ENCODE measurements at regions of chr12 and their contacts with region 1.

Region 1: DNA sequence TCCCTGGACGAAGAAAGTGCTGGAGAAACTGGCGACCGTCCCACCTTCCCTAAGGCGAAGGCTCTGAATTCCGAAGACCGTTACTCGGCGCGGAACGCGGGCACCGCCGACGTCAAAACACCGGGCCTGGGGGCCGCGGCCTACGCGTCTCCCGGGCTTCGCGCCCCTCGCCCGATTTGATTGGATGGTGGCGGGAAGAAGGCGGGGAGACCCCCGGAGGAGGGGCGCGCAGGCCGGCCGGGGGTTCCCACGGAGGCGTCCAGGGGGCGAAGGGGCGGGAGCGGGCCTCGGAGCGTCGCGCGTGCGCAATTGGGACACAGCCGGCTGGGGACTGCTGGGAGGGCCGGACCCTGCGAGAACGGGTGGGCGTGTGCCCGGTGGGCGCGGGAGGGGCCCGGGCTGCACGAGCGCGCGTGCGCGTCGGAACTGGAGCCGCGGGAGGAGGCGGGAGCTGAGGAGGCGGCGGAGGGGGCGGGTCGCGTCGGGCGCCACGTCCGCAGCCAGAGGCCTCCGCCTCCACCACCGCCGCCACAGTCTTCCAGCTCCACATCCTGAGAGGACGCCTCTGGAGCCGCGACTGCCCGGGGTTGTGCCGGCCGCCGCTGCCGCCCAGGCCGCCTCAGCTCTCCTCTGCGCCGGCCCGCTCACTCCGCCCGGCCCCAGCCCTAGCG is at the start of gene TMEM263:
- DNase-seq: peak; percentile 95
- H3K4me3 ChIP-seq: peak within 1 kb of the TSS; percentile 80
- H3K27ac ChIP-seq: peak within 1 kb of the TSS; percentile 82
- H3K4me1 ChIP-seq: peaks cover 26% of the 10 kb centered on the region
- CTCF ChIP-seq: no peak
- total RNA-seq, gene TMEM263: 34.1 and 43.9 TPM in 2 replicates

Region 2: DNA sequence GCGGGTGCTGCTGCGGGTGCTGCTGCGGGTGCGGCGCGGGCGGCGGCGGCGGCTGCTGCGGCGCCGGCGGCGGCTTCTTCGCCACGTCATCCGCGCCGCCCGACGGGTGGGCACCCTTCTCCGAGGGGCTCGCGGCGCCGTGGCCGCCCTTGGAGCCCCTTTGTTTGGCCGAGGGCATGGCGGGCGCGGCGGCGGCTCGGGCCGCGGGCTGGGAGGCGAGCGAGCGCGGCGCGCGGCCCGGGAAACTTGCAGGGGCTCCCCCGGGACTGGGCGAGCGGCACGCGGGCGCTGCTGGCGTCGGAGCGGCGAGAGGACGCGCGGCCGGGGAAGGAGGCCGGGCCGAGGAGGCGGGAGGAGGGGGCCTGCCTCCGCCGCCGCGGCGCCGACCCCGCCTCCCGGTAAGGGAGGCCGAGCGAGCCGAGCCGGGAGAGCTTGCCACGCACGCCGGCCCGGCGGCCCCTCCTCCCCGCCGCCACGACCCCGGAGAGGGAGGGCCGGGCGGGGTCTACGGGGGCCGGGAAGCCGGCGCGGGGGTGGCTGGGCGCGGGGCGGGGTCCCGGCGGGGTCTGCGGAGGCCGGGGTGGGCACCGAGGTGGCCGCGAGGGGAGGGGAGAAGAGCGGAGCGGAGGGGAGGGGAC is 707.7 kb before region 1 on chr12 and contains the start of gene CKAP4:
- CTCF ChIA-PET with region 1: no interaction called
- POLR2A ChIA-PET with region 1: no interaction called
- intact Hi-C with region 1: loop called (anchors 2 kb)
- DNase-seq: peak; percentile 74
- H3K4me3 ChIP-seq: peak within 1 kb of the TSS; percentile 84
- H3K27ac ChIP-seq: peak within 1 kb of the TSS; percentile 95
- H3K4me1 ChIP-seq: peaks cover 63% of the 10 kb centered on the region
- CTCF ChIP-seq: no peak
- total RNA-seq, gene CKAP4: 17.5 and 18.9 TPM in 2 replicates

Region 3: DNA sequence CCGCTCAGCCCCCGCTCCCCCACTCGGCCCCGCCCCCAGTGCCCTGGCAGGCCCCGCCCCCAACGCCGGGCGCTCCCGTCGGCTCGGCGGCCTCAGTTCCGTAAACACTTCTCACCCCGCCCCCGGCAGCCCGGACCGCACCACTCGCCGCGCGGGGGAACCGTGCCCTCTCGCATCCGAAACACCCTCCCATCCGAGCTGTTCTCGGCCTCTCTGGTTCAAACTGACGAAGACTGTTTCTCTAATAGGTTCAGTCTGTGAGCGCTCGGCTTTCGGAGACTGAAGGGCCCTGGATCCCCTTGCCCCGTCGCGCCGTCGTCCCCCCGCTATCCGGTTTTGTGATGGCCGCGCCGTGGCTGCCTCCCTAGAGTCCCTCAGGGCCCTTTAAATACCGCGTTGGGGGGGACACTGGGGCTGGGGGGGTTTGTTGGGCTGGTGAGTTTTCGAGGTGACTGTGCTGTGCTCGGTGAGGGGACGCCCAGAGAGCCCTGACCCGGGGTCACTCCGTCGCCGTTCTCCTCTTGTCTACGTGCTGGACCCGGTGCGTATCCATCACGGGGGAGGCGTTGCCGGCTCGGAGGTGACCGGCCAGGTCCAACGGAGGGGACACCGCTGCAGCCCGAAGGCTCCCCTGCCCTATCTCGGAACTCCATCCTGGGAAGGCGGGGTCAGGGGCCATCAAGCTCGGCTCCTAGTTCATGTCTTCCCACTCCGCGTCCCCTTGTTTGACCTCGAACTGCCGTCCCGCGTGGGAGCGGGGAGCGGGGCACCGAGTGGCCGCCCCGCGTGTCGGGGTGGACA is 652.9 kb before region 1 on chr12 and contains the start of gene TCP11L2:
- CTCF ChIA-PET with region 1: no interaction called
- POLR2A ChIA-PET with region 1: no interaction called
- intact Hi-C with region 1: loop called (anchors 5 kb)
- DNase-seq: peak; percentile 89
- H3K4me3 ChIP-seq: peak within 1 kb of the TSS; percentile 95
- H3K27ac ChIP-seq: peak within 1 kb of the TSS; percentile 57
- H3K4me1 ChIP-seq: peaks cover 44% of the 10 kb centered on the region
- CTCF ChIP-seq: no peak
- total RNA-seq, gene TCP11L2: 1.2 and 1.8 TPM in 2 replicates

Region 4: GRCh38 chr12:106760184-106760531 is 195.4 kb before region 1 on chr12:
- CTCF ChIA-PET with region 1: interaction called, 9 read pairs
- POLR2A ChIA-PET with region 1: no interaction called
- intact Hi-C with region 1: loop called (anchors 5 kb)
- DNase-seq: peak; percentile 95
- H3K4me3 ChIP-seq: peak overlapping the region; percentile 59
- H3K27ac ChIP-seq: peak overlapping the region; percentile 64
- H3K4me1 ChIP-seq: peaks cover 34% of the 10 kb centered on the region
- CTCF ChIP-seq: no peak

Region 5: GRCh38 chr12:106934277-106934676 is 21.2 kb before region 1 on chr12:
- CTCF ChIA-PET with region 1: no interaction called
- POLR2A ChIA-PET with region 1: no interaction called
- intact Hi-C with region 1: no loop called
- DNase-seq: no peak
- H3K4me3 ChIP-seq: no peak overlapping the region
- H3K27ac ChIP-seq: no peak overlapping the region
- H3K4me1 ChIP-seq: no peaks in the 10 kb centered on the region
- CTCF ChIP-seq: no peak

Region 6: DNA sequence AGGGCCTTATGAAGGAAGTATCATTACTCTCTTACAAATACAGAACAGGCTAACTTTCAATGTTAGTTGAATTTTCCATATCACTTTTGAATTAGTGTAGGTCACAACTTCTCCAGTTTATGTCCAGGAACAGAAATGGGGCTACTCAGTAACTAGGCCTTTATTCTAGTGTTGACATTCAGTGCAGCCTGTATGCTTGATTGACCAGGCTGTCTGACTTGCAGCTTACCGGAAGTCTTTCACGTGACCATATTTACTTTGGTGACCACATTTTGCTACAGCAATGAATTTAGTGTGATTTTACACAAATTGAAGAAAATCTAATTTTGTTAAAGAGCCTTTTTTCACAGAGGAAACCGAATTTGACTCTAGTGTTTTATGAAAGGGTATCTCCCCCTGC is 19.0 kb after region 1 on chr12:
- CTCF ChIA-PET with region 1: no interaction called
- POLR2A ChIA-PET with region 1: interaction called, 6 read pairs
- intact Hi-C with region 1: loop called (anchors 2 kb)
- DNase-seq: peak; percentile 63
- H3K4me3 ChIP-seq: peak overlapping the region; percentile 14
- H3K27ac ChIP-seq: no peak overlapping the region
- H3K4me1 ChIP-seq: peaks cover 21% of the 10 kb centered on the region
- CTCF ChIP-seq: no peak

Region 7: DNA sequence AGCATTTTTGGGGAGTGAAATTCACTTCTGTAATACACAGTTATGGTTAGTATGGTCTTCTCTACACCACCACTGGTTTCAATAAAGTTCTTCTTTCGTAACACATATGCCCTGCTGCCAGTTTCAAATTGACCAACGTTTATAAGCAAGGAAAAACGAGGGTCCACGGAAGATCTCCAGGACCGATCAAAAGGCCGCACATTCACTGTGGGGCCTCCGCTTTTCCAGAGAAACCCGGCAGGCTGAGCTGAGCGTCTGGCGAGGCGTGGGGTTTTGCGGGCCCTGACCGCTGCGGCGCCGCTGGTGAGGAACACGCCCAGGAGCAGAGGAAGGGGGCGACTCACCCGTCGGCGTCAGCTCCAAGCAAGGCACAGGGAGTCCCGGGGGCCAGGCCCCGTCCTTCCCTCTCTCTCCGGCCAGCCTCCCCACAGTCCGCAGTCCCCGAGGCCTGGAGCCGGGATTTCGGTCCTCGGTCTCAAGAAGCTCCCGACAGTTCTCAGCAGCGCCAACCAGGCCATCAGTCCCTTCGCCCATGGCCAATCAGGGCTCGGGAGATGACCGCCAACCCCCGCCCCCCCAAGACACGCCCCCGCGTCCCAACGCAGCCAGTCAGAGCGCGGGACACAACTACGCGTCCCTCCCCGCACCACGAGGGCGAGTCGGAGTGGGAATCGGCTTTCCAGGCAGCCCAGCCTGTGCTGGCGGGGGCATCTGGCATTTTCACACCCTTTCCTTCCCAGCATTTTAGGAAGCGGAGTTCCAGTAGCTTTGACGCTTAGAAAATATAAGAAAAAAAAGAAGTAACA is 31.3 kb after region 1 on chr12 and contains the start of gene MTERF2:
- CTCF ChIA-PET with region 1: no interaction called
- POLR2A ChIA-PET with region 1: interaction called, 8 read pairs
- intact Hi-C with region 1: loop called (anchors 1 kb)
- DNase-seq: peak; percentile 88
- H3K4me3 ChIP-seq: peak within 1 kb of the TSS; percentile 76
- H3K27ac ChIP-seq: no peak within 1 kb of the TSS
- H3K4me1 ChIP-seq: peaks cover 14% of the 10 kb centered on the region
- CTCF ChIP-seq: no peak; the same call in 1 of the 2 replicates
- total RNA-seq, gene MTERF2: 8.8 and 14.8 TPM in 2 replicates